Left colon (tissue), 2 donors: ENCODE measurements at regions of chr1 and their contacts with region 1.

Region 1: GRCh38 chr1:240027059-240027462 is 64.6 kb upstream of the FMN2 start:
- DNase-seq: peak in 1 of 2 donors; percentile 38
- ATAC-seq: peak; percentile 92

Region 2: GRCh38 chr1:240149484-240150094 is 122.5 kb after region 1 on chr1:
- intact Hi-C with region 1: loop called in 1 of 2 experiments (anchors 10 kb)
- DNase-seq: no peak
- ATAC-seq: no peak

Region 3: GRCh38 chr1:240189386-240189989 is 162.4 kb after region 1 on chr1:
- intact Hi-C with region 1: loop called in 1 of 2 experiments (anchors 10 kb)
- DNase-seq: peak in 1 of 2 donors; percentile 22
- ATAC-seq: peak; percentile 48

Region 4: GRCh38 chr1:240691521-240692338 is 664.7 kb after region 1 on chr1:
- intact Hi-C with region 1: loop called in 1 of 2 experiments (anchors 10 kb)
- DNase-seq: peak; percentile 11 to 26
- ATAC-seq: peak; percentile 66